Activated CD8-positive, alpha-beta memory T cell treated with anti-CD3 and anti-CD28 coated beads, Interleukin-2, amount 10 ng/mL, durations not matched to agents 7 days and 5 days (primary cell): ENCODE measurements at regions of chr7 and their contacts with region 1.

Region 1: DNA sequence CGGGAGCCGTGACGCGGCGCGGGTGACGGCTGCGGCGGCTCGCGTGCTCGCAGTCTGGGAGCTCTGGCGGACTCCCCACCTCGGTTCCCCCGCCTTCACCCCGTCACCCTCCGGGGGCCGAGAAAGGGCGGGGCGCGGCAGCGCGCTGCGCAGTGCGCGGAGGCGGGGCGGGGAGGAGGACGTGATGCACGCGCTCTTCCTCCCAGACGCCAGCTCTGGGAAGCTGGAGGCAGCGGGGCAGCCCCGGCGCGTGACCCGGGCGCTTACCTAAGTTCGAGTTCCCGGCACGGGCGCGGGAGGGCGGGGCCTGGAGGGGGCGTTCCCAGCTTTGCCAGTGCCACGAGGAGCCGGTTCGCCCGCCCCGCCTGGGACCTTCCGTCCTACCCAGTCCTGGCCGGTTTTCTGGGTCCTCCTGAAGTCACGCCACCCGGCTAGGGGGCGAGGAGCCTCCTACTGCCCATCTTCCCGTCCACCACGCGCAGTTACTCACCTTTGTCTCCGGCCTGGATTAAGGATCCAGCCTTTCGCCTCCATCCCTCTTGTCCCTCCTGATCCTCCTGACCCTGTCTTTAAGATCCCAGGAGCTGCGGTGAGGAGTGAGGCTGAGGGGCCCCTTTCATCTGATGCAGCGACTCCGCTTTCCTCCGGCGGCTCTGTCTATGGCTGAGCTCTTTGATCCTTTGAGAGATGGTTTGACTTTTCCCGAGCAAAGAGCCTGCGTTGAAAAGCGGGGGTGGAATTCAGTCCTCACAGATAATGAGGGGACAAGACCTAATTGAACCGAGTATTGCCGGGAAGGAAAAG is 470 bp upstream of the NAMPT start:
- DNase-seq: peak; percentile 98
- ATAC-seq: peak; percentile 82
- H3K4me3 Mint-ChIP-seq: peak overlapping the region; percentile 91
- H3K27ac Mint-ChIP-seq: peak overlapping the region; percentile 99
- H3K4me1 Mint-ChIP-seq: peaks cover 38% of the 10 kb centered on the region
- H3K27me3 Mint-ChIP-seq: no peaks in the 10 kb centered on the region

Region 2: GRCh38 chr7:106346678-106347217 is 61.5 kb after region 1 on chr7:
- CTCF ChIA-PET with region 1: interaction called, 18 read pairs
- DNase-seq: peak; percentile 81
- ATAC-seq: peak; percentile 85
- H3K4me3 Mint-ChIP-seq: peak overlapping the region; percentile 63
- H3K27ac Mint-ChIP-seq: peak overlapping the region; percentile 99
- H3K4me1 Mint-ChIP-seq: peaks cover 44% of the 10 kb centered on the region
- H3K27me3 Mint-ChIP-seq: no peaks in the 10 kb centered on the region

Region 3: GRCh38 chr7:106476751-106477150 is 191.5 kb after region 1 on chr7:
- CTCF ChIA-PET with region 1: no interaction called
- DNase-seq: no peak
- ATAC-seq: no peak
- H3K4me3 Mint-ChIP-seq: no peak overlapping the region
- H3K27ac Mint-ChIP-seq: no peak overlapping the region
- H3K4me1 Mint-ChIP-seq: peaks cover 7% of the 10 kb centered on the region
- H3K27me3 Mint-ChIP-seq: peaks cover 40% of the 10 kb centered on the region